Vagina (tissue), 2 donors: ENCODE measurements at regions of chr4 and their contacts with region 1.

Region 1: DNA sequence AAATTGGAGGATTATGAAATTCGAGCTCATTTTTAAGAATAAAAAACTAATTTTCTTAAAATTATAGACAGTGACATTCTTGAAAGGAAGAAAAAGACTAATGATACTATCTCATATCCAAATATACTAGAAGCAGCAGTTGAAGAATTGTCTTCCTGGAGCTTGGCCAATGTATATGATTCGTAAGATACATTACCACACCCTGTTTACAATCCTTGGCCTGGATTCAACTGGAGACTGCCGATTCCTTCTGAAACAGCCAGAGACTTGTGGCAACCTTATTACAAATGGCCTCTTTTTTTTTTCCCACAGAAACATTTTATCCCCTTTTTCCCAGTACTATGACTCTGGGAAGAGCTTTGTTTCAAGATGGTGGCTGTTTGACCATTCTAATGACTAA is 571.2 kb upstream of the FAT1 start:
- DNase-seq: no peak
- H3K4me3 ChIP-seq: no peak overlapping the region
- H3K27ac ChIP-seq: no peak overlapping the region
- H3K4me1 ChIP-seq: no peaks in the 10 kb centered on the region
- H3K27me3 ChIP-seq: no peaks in the 10 kb centered on the region
- CTCF ChIP-seq: no peak
- POLR2A ChIP-seq: no peak

Region 2: DNA sequence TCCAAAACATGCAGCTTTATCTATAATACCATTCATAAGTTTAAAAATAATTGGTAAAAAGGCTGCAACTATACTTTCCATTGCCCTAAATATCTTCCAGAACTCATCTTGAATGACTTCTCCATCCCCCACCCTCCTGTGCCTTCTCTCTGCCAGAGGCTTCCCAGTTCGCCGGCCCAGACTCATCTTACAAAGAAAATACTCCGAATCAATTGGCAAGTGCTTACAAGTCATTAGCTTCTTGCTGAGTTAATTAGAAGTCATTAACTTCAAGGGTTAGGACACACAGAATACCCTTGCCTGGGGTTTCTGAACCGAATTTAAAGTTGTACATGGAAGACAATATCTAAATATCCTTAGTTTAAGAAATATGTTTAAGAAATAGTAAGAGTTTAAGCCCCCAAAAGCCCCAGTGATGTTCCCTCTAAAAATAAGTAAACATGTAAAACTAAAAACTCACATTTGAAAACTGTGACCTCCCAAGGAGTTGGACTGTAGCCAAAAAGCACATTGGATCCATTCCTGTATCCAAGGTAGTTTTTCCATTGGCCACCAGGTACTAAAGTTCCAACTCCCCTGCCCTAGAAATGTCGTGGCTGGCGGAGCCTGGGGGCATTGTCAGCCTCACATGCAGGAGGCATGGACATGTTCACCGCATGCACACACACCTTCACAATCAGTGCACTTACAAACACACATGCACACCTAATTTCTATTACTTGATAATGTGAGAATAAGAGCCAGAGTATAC is 36.0 kb before region 1 on chr4:
- intact Hi-C with region 1: no loop called
- DNase-seq: no peak
- H3K4me3 ChIP-seq: no peak overlapping the region
- H3K27ac ChIP-seq: no peak overlapping the region
- H3K4me1 ChIP-seq: no peaks in the 10 kb centered on the region
- H3K27me3 ChIP-seq: no peaks in the 10 kb centered on the region
- CTCF ChIP-seq: no peak
- POLR2A ChIP-seq: no peak

Region 3: GRCh38 chr4:187276736-187277408 is 18.0 kb before region 1 on chr4:
- intact Hi-C with region 1: no loop called
- DNase-seq: no peak
- H3K4me3 ChIP-seq: no peak overlapping the region
- H3K27ac ChIP-seq: no peak overlapping the region
- H3K4me1 ChIP-seq: no peaks in the 10 kb centered on the region
- H3K27me3 ChIP-seq: no peaks in the 10 kb centered on the region
- CTCF ChIP-seq: no peak
- POLR2A ChIP-seq: no peak

Region 4: GRCh38 chr4:188341428-188341827 is 1046.6 kb after region 1 on chr4:
- intact Hi-C with region 1: loop called (anchors 5 kb)
- DNase-seq: no peak
- H3K4me3 ChIP-seq: no peak overlapping the region
- H3K27ac ChIP-seq: no peak overlapping the region
- H3K4me1 ChIP-seq: no peaks in the 10 kb centered on the region
- H3K27me3 ChIP-seq: no peaks in the 10 kb centered on the region
- CTCF ChIP-seq: no peak
- POLR2A ChIP-seq: no peak